ENCODE measurements at regions of chr11 and their contacts with region 1.

Region 1: DNA sequence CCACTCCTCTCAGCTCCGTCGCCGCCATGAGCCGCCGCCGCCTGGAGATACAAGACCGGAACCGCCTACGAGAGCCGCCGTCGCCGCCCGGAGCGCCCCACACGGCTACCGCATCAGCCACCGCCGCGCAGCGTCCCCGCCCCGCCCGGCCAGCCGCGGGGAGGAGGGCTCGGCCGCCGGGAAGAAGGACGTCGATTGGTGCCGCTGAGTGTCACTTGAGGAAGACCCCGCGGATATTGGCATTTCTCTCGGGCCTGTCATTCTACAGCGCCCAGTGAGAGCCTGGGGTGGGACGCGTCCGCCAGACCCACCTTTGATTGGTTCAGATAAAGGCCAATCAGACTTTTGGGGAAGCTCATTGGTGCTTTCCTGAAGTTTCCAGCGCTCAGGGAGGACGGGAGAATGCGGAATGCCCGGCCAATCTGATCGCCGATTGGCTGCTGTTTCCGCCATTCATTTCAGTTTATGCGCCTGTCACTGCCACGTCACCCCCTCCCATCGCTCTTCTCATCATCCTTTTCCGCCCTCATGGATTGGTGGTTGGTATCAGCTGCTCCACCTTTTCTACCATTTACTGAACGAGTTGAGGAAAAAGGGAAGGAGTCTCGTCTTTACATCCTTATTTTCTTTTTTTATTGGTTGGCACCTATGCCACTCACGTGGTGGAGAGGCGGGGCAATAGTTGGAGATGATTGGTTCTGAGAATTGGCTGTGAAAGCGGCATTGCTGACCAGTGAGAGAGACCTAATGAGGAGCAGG is at the start of gene OSBP:
- DNase-seq: peak; percentile 98
- ATAC-seq: peak; percentile 92
- total RNA-seq, gene OSBP: 40.9 TPM

Region 2: GRCh38 chr11:59668950-59669610 is 53.3 kb after region 1 on chr11 and contains the start of gene PATL1:
- intact Hi-C with region 1: loop called (anchors 2 kb)
- DNase-seq: peak; percentile 100
- ATAC-seq: peak; percentile 97
- total RNA-seq, gene PATL1: 24.5 TPM